KBM-7 (cell line): ENCODE measurements at regions of chr18 and their contacts with region 1.

Region 1: DNA sequence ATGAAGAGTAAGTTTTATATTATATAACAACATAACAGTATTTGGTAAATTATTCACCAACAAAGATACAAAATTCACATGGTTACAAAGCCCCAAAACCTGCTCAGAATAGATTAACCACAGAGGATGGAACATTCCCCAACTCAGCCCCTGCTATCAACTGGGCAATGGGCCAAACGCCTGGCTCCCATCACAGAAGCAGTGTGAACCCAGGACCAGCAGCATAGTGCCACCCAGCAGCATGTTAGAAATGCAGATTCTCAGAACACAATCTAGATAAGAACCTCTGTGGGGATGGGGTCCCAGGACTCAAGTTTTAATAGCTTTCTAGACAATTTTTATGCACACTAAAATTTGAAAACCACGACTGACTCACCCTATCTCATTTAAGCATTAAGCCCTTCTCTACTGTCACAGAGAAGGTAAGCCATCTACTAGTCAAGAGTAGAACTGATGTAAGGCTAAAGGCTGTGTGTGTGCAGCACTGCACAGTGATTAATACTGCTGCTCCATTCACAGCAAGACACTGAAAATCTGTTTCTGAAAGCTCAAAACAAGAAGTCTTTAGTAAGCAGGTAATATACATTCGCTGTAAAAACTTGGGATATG is 15.2 kb downstream of the AFG3L2 start:
- DNase-seq: no peak

Region 2: DNA sequence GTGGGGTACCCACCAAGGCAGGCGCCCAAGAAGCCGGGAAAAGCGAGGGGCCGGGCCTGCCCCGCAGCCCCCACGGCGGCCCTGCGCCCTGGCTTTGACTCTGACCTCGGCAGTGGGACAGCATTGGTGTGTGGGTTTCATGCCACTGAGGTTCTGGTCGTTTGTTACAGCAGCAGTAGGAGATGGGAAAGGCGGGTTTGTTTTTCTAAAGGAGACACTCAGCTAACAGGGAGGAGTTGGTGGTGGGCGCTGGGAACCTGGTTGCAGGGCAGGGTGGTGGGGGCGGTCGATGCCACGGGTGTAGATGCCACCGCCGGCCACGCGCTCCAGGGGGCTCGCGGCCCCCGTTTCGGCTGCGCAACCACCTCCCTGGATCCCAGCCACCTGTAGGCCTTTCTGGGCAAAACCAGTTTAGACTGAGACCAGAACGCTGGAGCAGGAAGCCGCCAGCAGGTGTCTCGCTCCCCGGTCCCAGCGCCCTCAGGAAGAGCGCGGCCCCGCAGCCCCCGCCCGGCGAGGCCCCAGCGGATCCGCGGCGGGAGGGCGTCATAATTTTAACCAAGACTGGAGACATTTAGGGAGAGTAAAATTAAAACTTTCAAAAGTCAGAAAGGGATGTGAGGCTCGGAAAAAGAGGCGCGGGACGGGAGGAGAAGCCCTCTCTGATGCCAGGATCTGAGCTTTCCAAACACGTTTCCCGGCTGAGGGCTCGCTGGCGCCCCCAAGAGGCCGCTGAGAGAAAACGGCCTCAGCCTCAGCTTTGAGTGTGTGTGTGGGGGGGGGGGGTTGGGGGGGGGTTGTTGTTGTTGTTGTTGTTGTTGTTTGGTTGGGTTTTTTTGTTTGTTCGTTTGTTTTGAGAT is 90.3 kb before region 1 on chr18:
- in situ Hi-C with region 1: loop called (anchors 25 kb)
- DNase-seq: peak; percentile 86

Region 3: GRCh38 chr18:12478269-12479047 is 116.6 kb after region 1 on chr18:
- in situ Hi-C with region 1: no loop called
- DNase-seq: no peak

Region 4: GRCh38 chr18:12608292-12608691 is 246.4 kb after region 1 on chr18:
- in situ Hi-C with region 1: no loop called
- DNase-seq: no peak